Upper lobe of right lung (tissue), 1 donor: ENCODE measurements at regions of chr9 and their contacts with region 1.

Region 1: GRCh38 chr9:89602978-89603766 is 1.6 kb upstream of the GADD45G start:
- DNase-seq: peak; percentile 95
- ATAC-seq: peak; percentile 58
- H3K4me3 ChIP-seq: peak overlapping the region; percentile 74
- H3K27ac ChIP-seq: peak overlapping the region; percentile 17
- H3K4me1 ChIP-seq: peaks cover 29% of the 10 kb centered on the region
- H3K27me3 ChIP-seq: peaks cover 3% of the 10 kb centered on the region
- CTCF ChIP-seq: peak; percentile 86

Region 2: GRCh38 chr9:90102292-90102901 is 499.2 kb after region 1 on chr9:
- intact Hi-C with region 1: loop called (anchors 5 kb)
- DNase-seq: peak; percentile 86
- ATAC-seq: peak; percentile 98
- H3K4me3 ChIP-seq: no peak overlapping the region
- H3K27ac ChIP-seq: no peak overlapping the region
- H3K4me1 ChIP-seq: peaks cover 5% of the 10 kb centered on the region
- H3K27me3 ChIP-seq: no peaks in the 10 kb centered on the region
- CTCF ChIP-seq: peak; percentile 77